CD14-positive monocyte (primary cell): ENCODE measurements at regions of chr3 and their contacts with region 1.

Region 1: GRCh38 chr3:50192689-50193141 is 1.3 kb downstream of the GNAT1 start:
- DNase-seq: peak; percentile 44 to 70 (median 62)
- H3K4me3 ChIP-seq: no peak overlapping the region
- H3K4me3 Mint-ChIP-seq: peak overlapping the region in 1 of 2 donors; percentile 55
- H3K27ac ChIP-seq: no peak overlapping the region
- H3K27ac Mint-ChIP-seq: peak overlapping the region in 1 of 7 donors; percentile 50
- H3K4me1 ChIP-seq: peaks cover 25 to 37% of the 10 kb centered on the region in 2 donors
- H3K4me1 Mint-ChIP-seq: peaks cover 27% of the 10 kb centered on the region
- H3K27me3 ChIP-seq: peaks cover 15 to 37% of the 10 kb centered on the region in 2 donors
- H3K27me3 Mint-ChIP-seq: peaks cover 36 to 47% (median 44%) of the 10 kb centered on the region in 3 donors
- CTCF ChIP-seq: peak; percentile 97

Region 2: GRCh38 chr3:50272911-50273693 is 80.4 kb after region 1 on chr3:
- intact Hi-C with region 1: loop called (anchors 1 kb)
- DNase-seq: peak; percentile 81 to 87 (median 85)
- H3K4me3 ChIP-seq: peak overlapping the region; percentile 16 to 72 (median 32)
- H3K4me3 Mint-ChIP-seq: peak overlapping the region; percentile 82 to 93
- H3K27ac ChIP-seq: peak overlapping the region in 1 of 2 donors; percentile 20
- H3K27ac Mint-ChIP-seq: peak overlapping the region in 4 of 7 donors; percentile 43 to 86 (median 77)
- H3K4me1 ChIP-seq: peaks cover 16 to 34% of the 10 kb centered on the region in 2 donors
- H3K4me1 Mint-ChIP-seq: peaks cover 26% of the 10 kb centered on the region
- H3K27me3 ChIP-seq: peaks cover 24 to 47% of the 10 kb centered on the region in 2 donors
- H3K27me3 Mint-ChIP-seq: peaks cover 51 to 66% (median 64%) of the 10 kb centered on the region in 3 donors
- CTCF ChIP-seq: peak; percentile 96

Region 3: DNA sequence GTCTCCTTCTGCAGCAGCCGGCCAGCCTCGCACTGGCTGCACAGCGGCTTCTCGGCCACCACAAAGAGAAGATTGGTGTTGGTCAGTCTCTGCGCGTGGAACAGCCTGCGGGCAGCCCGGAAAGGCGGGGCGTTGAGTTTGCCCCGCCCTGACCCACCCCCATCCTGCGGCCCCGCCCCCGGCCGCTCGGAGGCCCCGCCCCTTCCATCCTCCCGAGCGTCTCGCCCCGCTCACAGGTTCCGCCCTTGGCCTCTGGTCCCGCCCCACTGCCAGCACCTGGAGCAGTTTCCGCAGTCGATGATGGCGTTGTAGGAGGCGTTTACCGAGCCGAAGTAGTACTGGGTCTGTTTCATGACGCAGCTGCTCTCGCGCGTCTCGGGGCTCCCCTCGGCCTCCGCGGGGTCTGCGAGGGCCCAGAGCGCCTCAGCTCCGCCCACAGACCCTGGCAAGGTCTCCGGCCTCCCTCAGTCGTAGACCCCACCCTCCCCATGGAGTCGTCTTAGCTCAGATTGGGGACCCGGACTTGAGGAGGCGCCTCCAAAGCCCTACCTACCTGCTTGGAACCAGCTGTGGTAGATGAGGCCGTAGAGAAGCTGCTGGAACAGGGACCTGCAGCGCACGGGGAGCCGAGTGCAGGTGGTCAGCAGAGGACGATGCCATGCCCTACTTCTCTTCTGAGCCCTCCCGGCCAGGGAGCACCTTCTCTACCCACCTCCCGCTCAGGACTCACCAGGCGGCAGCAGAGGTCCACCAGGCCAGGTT is 172.5 kb after region 1 on chr3:
- intact Hi-C with region 1: no loop called
- DNase-seq: peak; percentile 71 to 77 (median 72)
- H3K4me3 ChIP-seq: peak overlapping the region; percentile 41 to 77 (median 45)
- H3K4me3 Mint-ChIP-seq: peak overlapping the region; percentile 77 to 87
- H3K27ac ChIP-seq: no peak overlapping the region
- H3K27ac Mint-ChIP-seq: peak overlapping the region in 3 of 7 donors; percentile 11 to 72 (median 66)
- H3K4me1 ChIP-seq: peaks cover 13 to 15% of the 10 kb centered on the region in 2 donors
- H3K4me1 Mint-ChIP-seq: peaks cover 13% of the 10 kb centered on the region
- H3K27me3 ChIP-seq: peaks cover 0 to 12% of the 10 kb centered on the region in 2 donors
- H3K27me3 Mint-ChIP-seq: peaks cover 11 to 30% (median 14%) of the 10 kb centered on the region in 3 donors
- CTCF ChIP-seq: no peak